H1 (cell line): ENCODE measurements at regions of chr3 and their contacts with region 1.

Region 1: GRCh38 chr3:129052675-129053074 is 7.9 kb upstream of the GP9 start:
- DNase-seq: no peak
- H3K4me3 ChIP-seq: no peak overlapping the region
- H3K27ac ChIP-seq: no peak overlapping the region
- H3K4me1 ChIP-seq: no peaks in the 10 kb centered on the region
- H3K27me3 ChIP-seq: no peaks in the 10 kb centered on the region
- CTCF ChIP-seq: no peak
- EP300 ChIP-seq: no peak
- POLR2A ChIP-seq: no peak
- RAD21 ChIP-seq: no peak

Region 2: GRCh38 chr3:129010310-129010956 is 42.2 kb before region 1 on chr3:
- CTCF ChIA-PET with region 1: interaction called, 23 read pairs
- POLR2A ChIA-PET with region 1: no interaction called
- DNase-seq: no peak
- H3K4me3 ChIP-seq: no peak overlapping the region
- H3K27ac ChIP-seq: no peak overlapping the region
- H3K4me1 ChIP-seq: no peaks in the 10 kb centered on the region; a peak in 1 of 7 replicates
- H3K27me3 ChIP-seq: peaks cover 0 to 11% (median 4%) of the 10 kb centered on the region in 4 experiments; a peak in 5 of 7 replicates
- CTCF ChIP-seq: no peak
- EP300 ChIP-seq: no peak
- POLR2A ChIP-seq: no peak
- RAD21 ChIP-seq: no peak

Region 3: DNA sequence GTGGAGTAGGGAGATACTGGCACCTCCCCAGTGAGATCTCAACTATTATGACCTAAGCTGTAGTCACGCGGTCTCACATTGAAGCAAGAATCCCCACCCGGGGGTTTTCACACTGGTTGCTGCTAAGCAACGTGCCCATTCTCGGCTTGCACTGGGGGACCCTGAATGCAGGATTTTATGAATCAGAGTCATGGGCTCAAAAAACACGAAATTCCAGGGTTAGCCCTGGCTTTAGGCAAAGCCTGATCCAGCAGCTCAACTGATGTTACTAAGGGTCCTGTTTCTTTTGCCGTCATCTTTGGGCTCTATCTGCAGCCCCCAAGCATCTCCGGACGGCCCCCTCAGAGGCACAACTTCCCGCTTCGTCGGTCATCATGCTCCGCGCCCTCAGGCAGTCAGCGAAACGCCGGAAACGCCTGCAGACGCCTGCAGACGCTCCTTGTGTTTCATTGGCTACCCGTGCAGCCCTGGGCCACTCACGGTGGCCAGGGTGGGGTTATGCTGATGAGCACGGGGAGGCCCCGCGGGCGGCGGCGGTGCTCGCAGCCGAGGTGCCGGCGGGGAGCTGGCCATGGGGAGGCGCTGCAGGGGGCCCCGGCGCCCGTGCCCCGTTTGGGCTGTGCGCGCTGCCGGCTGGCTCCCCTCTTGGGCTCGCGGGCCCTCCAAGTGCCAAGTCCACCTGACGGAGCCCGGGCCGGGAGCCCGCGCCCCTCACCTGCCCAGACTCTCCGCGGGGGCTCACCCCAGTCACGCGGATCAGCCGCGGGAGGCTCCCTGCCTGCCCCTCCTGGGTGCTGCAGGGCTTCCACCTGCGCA is 25.7 kb before region 1 on chr3:
- CTCF ChIA-PET with region 1: interaction called, 32 read pairs
- POLR2A ChIA-PET with region 1: interaction called, 3 read pairs
- DNase-seq: peak; percentile 73 to 81
- H3K4me3 ChIP-seq: peak overlapping the region in 3 of 4 experiments; percentile 11 to 52 (median 14); a peak in 6 of 8 replicates
- H3K27ac ChIP-seq: no peak overlapping the region
- H3K4me1 ChIP-seq: peaks cover 0 to 4% (median 0%) of the 10 kb centered on the region in 4 experiments; a peak in 3 of 7 replicates
- H3K27me3 ChIP-seq: peaks cover 5 to 23% (median 19%) of the 10 kb centered on the region in 4 experiments
- CTCF ChIP-seq: peak; percentile 27 to 42 (median 32)
- EP300 ChIP-seq: no peak
- POLR2A ChIP-seq: no peak
- RAD21 ChIP-seq: peak in 1 of 2 experiments; percentile 28; a peak in 2 of 4 replicates

Region 4: DNA sequence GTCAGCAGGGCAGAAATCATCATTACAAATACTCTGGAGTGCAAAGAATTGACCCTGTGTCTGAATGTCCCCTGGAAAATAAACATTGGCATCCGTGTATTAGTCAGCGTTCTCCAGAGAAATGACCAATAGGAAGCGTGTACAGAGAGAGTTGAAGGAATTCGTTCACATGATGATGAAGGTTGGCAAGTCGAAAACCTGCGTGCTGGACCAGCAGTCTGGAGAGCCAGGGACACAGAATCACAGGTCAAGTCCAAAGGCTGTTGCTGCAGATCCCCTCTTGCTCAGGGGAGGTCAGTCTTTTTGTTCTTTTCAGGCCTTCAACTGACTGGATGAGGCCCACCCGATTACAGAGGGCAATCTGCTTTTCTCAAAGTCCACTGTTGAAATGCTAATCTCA is 24.5 kb after region 1 on chr3:
- CTCF ChIA-PET with region 1: interaction called, 210 read pairs
- POLR2A ChIA-PET with region 1: no interaction called
- DNase-seq: no peak
- H3K4me3 ChIP-seq: no peak overlapping the region
- H3K27ac ChIP-seq: no peak overlapping the region
- H3K4me1 ChIP-seq: no peaks in the 10 kb centered on the region
- H3K27me3 ChIP-seq: no peaks in the 10 kb centered on the region
- CTCF ChIP-seq: no peak
- EP300 ChIP-seq: no peak
- POLR2A ChIP-seq: no peak
- RAD21 ChIP-seq: no peak

Region 5: DNA sequence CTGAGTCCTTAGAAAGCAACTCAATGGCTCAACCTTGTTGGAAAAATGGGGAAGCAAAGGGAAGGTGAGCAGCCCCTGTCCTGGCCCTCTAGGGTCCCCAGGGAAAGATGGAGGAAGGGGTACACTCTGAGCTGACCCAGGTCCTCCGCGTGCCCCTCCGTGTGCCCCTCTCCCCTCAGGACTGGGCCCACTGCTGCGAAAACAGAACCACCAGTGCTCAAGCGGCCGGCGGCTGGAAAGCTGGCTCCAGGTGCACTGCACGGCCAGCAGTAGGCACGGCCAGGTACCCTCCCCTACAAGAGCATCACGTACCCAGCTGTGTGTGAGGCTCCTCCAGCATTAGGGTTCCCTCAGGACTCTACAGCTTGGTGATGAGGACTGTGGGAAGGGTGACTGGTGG is 42.6 kb after region 1 on chr3:
- CTCF ChIA-PET with region 1: interaction called, 13 read pairs
- POLR2A ChIA-PET with region 1: interaction called, 3 read pairs
- DNase-seq: no peak
- H3K4me3 ChIP-seq: no peak overlapping the region
- H3K27ac ChIP-seq: no peak overlapping the region
- H3K4me1 ChIP-seq: no peaks in the 10 kb centered on the region
- H3K27me3 ChIP-seq: no peaks in the 10 kb centered on the region
- CTCF ChIP-seq: no peak
- EP300 ChIP-seq: no peak
- POLR2A ChIP-seq: no peak
- RAD21 ChIP-seq: no peak